IMR-90 (cell line): ENCODE measurements at regions of chr19 and their contacts with region 1.

Region 1: DNA sequence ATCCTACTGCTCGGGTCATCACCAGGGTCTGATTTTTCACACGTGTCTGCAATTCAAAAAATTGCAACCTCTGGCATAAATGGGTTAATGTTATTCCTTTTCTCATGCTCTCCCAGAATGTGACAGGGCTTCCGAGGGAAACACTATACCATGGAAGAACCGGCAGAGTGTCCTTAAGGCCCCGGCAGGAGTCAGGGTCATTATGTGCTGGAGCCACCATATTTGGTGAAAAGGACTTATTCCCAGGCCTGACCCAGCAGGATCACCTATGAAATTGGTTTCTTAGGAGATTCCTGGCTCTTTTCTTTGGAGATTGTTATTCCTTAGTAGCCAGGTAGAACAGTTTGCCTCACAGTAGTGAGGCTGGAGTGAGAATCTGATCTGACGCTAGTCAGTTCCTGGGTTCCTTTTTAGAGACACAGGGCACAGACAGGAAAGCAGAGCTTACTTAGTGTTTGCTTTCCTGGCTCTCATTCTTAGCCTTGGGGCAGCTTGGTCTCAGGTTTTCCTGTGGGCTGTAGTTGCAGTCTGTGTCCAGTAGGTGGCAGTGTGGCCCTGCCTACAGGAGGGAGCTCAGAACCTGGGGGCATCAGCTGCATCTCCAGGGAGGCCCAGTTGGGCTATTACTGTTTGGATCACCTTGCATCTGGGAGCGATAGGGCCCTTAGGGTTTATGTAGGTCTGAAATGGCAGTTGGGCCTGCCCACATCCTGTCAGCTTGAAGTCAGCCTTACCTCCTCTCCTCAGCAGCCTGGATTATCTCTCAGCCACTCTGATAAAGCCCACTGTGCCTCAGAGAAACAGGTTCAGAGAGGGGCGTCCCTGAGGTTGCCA is 12.4 kb downstream of the SNRNP70 start:
- DNase-seq: peak; percentile 72
- ATAC-seq: peak; percentile 97
- H3K4me3 ChIP-seq: no peak overlapping the region
- H3K27ac ChIP-seq: no peak overlapping the region
- H3K4me1 ChIP-seq: no peaks in the 10 kb centered on the region
- H3K27me3 ChIP-seq: no peaks in the 10 kb centered on the region
- CTCF ChIP-seq: peak; percentile 92
- POLR2A ChIP-seq: no peak
- RAD21 ChIP-seq: peak; percentile 93

Region 2: GRCh38 chr19:49118565-49119410 is 21.1 kb after region 1 on chr19 and contains the start of gene C19orf73:
- CTCF ChIA-PET with region 1: interaction called, 13 read pairs
- POLR2A ChIA-PET with region 1: no interaction called
- dilution Hi-C with region 1: no loop called
- in situ Hi-C with region 1: no loop called
- intact Hi-C with region 1: no loop called
- DNase-seq: peak; percentile 91
- ATAC-seq: peak; percentile 86
- H3K4me3 ChIP-seq: peak within 1 kb of the TSS; percentile 59
- H3K27ac ChIP-seq: peak within 1 kb of the TSS; percentile 81
- H3K4me1 ChIP-seq: peaks cover 6% of the 10 kb centered on the region
- H3K27me3 ChIP-seq: peaks cover 8% of the 10 kb centered on the region
- CTCF ChIP-seq: no peak; the same call in 1 of the 2 replicates
- POLR2A ChIP-seq: peak; percentile 50; the same call in 1 of the 2 replicates
- RAD21 ChIP-seq: no peak
- total RNA-seq, gene C19orf73: 0.28 TPM in 1 of 2 replicates, not detected in the other

Region 3: DNA sequence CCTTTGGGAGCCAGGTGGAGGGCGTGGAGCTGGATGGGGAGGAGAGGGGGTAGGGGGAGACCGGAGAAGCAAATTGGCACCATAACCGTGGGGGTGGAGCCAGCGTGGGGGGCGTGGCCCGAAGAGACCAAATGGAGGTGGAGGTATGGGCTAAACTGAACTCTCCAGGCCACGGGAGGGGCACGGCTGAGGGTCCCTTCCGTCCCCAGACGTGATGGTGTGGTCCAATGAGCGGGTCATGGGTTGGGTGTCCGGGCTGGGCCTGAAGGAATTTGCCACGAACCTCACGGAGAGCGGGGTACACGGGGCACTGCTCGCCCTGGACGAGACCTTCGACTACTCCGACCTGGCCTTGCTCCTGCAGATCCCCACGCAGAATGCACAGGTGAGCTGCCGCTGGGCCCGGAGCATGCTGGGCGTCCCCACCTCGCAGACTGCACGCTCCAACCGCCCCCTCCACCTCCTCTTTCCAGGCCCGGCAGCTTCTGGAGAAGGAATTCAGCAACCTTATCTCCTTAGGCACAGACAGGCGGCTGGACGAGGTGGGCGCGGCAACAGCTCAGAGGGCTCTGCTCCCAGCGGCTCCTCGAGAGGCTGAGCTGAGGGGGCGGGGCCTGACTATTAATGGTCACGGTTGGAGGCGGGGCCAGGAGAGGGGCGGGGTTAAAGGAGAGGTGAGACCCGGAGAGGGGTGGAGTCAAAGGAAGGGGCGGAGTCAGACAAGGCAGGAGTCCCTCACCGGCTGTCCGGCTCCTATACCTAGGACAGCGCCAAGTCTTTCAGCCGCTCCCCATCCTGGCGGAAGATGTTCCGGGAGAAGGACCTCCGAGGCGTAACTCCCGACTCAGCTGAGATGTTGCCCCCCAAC is 51.3 kb after region 1 on chr19:
- CTCF ChIA-PET with region 1: interaction called, 10 read pairs
- POLR2A ChIA-PET with region 1: no interaction called
- dilution Hi-C with region 1: no loop called
- in situ Hi-C with region 1: no loop called
- intact Hi-C with region 1: loop called (anchors 1 kb)
- DNase-seq: peak; percentile 86
- ATAC-seq: peak; percentile 83
- H3K4me3 ChIP-seq: peak overlapping the region; percentile 53
- H3K27ac ChIP-seq: no peak overlapping the region
- H3K4me1 ChIP-seq: peaks cover 12% of the 10 kb centered on the region
- H3K27me3 ChIP-seq: no peaks in the 10 kb centered on the region
- CTCF ChIP-seq: no peak
- POLR2A ChIP-seq: no peak
- RAD21 ChIP-seq: no peak

Region 4: DNA sequence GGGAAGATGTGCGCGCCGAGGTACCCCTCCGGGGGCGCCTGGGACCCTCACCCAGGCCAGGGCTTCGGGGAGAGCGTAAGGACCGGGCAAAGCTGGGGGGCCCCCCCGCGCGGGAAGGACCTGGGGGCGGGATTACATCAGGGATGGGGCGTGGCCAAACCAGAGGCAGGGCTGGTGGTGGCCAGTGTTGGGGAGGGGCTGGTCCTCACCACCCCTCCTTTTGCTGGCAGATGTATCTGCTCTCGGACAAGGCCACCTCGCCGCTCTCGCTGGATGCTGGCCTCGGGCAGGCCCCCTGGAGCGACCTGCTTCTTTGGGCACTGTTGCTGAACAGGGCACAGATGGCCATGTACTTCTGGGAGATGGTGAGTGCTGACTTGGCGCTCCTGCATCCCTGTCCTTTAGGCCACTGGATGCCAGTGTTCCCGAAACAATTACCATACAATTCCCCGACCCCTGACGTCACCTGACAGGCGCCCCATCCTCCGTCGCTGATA is 85.2 kb after region 1 on chr19:
- CTCF ChIA-PET with region 1: no interaction called
- POLR2A ChIA-PET with region 1: interaction called, 16 read pairs
- dilution Hi-C with region 1: no loop called
- in situ Hi-C with region 1: no loop called
- intact Hi-C with region 1: no loop called
- DNase-seq: no peak
- ATAC-seq: no peak
- H3K4me3 ChIP-seq: no peak overlapping the region
- H3K27ac ChIP-seq: no peak overlapping the region
- H3K4me1 ChIP-seq: no peaks in the 10 kb centered on the region
- H3K27me3 ChIP-seq: no peaks in the 10 kb centered on the region
- CTCF ChIP-seq: no peak
- POLR2A ChIP-seq: no peak
- RAD21 ChIP-seq: no peak

Region 5: DNA sequence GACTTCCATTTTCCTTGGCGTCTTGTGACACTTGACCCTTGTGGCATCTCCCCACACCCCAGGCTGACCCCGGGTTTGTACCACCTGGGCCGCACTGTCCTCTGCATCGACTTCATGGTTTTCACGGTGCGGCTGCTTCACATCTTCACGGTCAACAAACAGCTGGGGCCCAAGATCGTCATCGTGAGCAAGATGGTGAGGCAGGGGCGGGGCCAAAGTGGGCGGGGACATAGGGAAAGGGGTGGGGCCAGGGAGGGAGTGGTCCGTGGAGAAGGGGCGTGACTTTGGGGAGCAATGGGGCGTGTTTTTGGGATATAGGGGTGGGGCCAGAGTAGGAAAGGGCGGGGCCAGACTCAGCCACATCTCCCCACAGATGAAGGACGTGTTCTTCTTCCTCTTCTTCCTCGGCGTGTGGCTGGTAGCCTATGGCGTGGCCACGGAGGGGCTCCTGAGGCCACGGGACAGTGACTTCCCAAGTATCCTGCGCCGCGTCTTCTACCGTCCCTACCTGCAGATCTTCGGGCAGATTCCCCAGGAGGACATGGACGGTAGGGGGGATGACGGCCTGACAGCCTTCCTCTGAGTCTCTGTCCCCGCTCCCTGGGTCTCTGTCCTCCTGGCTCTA is 102.7 kb after region 1 on chr19:
- CTCF ChIA-PET with region 1: interaction called, 12 read pairs
- POLR2A ChIA-PET with region 1: no interaction called
- dilution Hi-C with region 1: no loop called
- in situ Hi-C with region 1: loop called (anchors 5 kb)
- intact Hi-C with region 1: loop called (anchors 1 kb)
- DNase-seq: no peak
- ATAC-seq: peak; percentile 28; the same call in 1 of the 2 replicates
- H3K4me3 ChIP-seq: no peak overlapping the region
- H3K27ac ChIP-seq: no peak overlapping the region
- H3K4me1 ChIP-seq: no peaks in the 10 kb centered on the region
- H3K27me3 ChIP-seq: no peaks in the 10 kb centered on the region
- CTCF ChIP-seq: no peak
- POLR2A ChIP-seq: no peak
- RAD21 ChIP-seq: no peak

Region 6: GRCh38 chr19:49210108-49210900 is 112.6 kb after region 1 on chr19:
- CTCF ChIA-PET with region 1: interaction called, 5 read pairs
- POLR2A ChIA-PET with region 1: no interaction called
- dilution Hi-C with region 1: no loop called
- in situ Hi-C with region 1: no loop called
- intact Hi-C with region 1: loop called (anchors 1 kb)
- DNase-seq: no peak
- ATAC-seq: 0 out of 2 replicates have a peak, but pooled peaks have one; percentile 36
- H3K4me3 ChIP-seq: no peak overlapping the region
- H3K27ac ChIP-seq: no peak overlapping the region
- H3K4me1 ChIP-seq: no peaks in the 10 kb centered on the region
- H3K27me3 ChIP-seq: no peaks in the 10 kb centered on the region
- CTCF ChIP-seq: no peak
- POLR2A ChIP-seq: no peak
- RAD21 ChIP-seq: no peak

Region 7: GRCh38 chr19:49224856-49225255 is 127.2 kb after region 1 on chr19:
- CTCF ChIA-PET with region 1: interaction called, 9 read pairs
- POLR2A ChIA-PET with region 1: no interaction called
- dilution Hi-C with region 1: no loop called
- in situ Hi-C with region 1: no loop called
- intact Hi-C with region 1: loop called (anchors 2 kb)
- DNase-seq: peak; percentile 57
- ATAC-seq: peak; percentile 79
- H3K4me3 ChIP-seq: no peak overlapping the region
- H3K27ac ChIP-seq: no peak overlapping the region
- H3K4me1 ChIP-seq: no peaks in the 10 kb centered on the region
- H3K27me3 ChIP-seq: peaks cover 3% of the 10 kb centered on the region; the same call in 1 of the 2 replicates
- CTCF ChIP-seq: peak; percentile 60
- POLR2A ChIP-seq: no peak
- RAD21 ChIP-seq: peak; percentile 67